ENCODE measurements at regions of chr20 and their contacts with region 1.

Region 1: GRCh38 chr20:33992923-33993575 is 662 bp upstream of the RALY start:
- DNase-seq: peak; percentile 100
- H3K4me3 ChIP-seq: peak overlapping the region; percentile 70
- H3K27ac ChIP-seq: peak overlapping the region; percentile 68 to 93
- H3K4me1 ChIP-seq: peaks cover 13% of the 10 kb centered on the region
- H3K27me3 ChIP-seq: no peaks in the 10 kb centered on the region
- CTCF ChIP-seq: no peak
- EP300 ChIP-seq: no peak
- POLR2A ChIP-seq: peak; percentile 49

Region 2: DNA sequence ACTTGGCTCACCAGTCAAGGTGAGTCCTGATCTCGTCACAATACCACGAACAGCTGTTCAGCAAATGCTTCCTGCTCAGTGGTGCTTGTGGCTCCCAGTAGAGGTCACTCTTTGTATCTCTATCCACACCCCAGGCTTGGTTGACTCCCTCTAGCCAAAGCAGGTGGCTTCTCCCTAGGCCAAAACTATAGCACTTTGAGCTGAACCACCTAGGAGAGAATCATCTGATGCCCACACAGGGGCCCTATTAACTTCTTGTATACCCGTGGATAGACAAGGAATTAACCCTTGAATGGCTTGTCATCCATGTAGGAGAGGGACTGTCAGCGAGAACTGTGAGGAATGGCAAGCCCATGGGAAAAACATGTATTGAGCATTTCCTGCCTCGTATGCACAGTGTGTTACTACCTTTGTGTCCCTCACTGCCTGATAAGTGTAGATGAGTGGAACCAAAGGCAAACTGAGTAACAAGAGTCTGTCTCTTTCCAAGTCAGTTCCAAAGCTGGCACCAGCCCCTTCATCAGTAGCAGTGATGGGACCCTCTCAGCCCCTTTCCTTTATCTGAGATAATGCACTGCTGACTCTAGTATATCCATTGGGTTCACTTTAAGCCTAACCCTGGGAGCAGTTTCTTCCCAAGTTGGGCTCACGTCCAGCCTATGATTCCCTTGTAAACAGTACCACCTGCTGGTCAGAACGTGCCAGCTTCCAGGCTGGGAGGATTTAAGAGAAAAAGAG is 76.5 kb after region 1 on chr20:
- intact Hi-C with region 1: loop called in 3 of 4 experiments (anchors 10 kb)
- DNase-seq: peak; percentile 72 to 85 (median 82)
- H3K4me3 ChIP-seq: no peak overlapping the region
- H3K27ac ChIP-seq: no peak overlapping the region
- H3K4me1 ChIP-seq: peaks cover 2% of the 10 kb centered on the region
- H3K27me3 ChIP-seq: no peaks in the 10 kb centered on the region
- CTCF ChIP-seq: peak; percentile 84 to 92 (median 84)
- EP300 ChIP-seq: no peak
- POLR2A ChIP-seq: no peak

Region 3: GRCh38 chr20:34282041-34282440 is 289.0 kb after region 1 on chr20:
- intact Hi-C with region 1: no loop called
- DNase-seq: no peak
- H3K4me3 ChIP-seq: no peak overlapping the region
- H3K27ac ChIP-seq: no peak overlapping the region
- H3K4me1 ChIP-seq: no peaks in the 10 kb centered on the region
- H3K27me3 ChIP-seq: no peaks in the 10 kb centered on the region
- CTCF ChIP-seq: no peak
- EP300 ChIP-seq: no peak
- POLR2A ChIP-seq: no peak